ENCODE measurements at regions of chrX and their contacts with region 1.

Region 1: GRCh38 chrX:53317365-53318069 is 36.1 kb upstream of the IQSEC2 start:
- DNase-seq: peak; percentile 15 to 82
- H3K4me3 ChIP-seq: peak overlapping the region in 2 of 4 experiments; percentile 3 to 19; a peak in 2 of 8 replicates
- H3K27ac ChIP-seq: no peak overlapping the region
- H3K4me1 ChIP-seq: peaks cover 4 to 20% (median 7%) of the 10 kb centered on the region in 4 experiments
- H3K27me3 ChIP-seq: peaks cover 1 to 29% (median 16%) of the 10 kb centered on the region in 4 experiments; a peak in 6 of 7 replicates
- CTCF ChIP-seq: peak in 2 of 3 experiments; percentile 68 to 72; a peak in 3 of 4 replicates
- EP300 ChIP-seq: no peak
- POLR2A ChIP-seq: no peak
- RAD21 ChIP-seq: peak; percentile 67 to 76

Region 2: GRCh38 chrX:53284684-53285447 is 32.7 kb before region 1 on chrX:
- CTCF ChIA-PET with region 1: interaction called, 27 read pairs
- POLR2A ChIA-PET with region 1: no interaction called
- DNase-seq: peak; percentile 21 to 77
- H3K4me3 ChIP-seq: no peak overlapping the region
- H3K27ac ChIP-seq: no peak overlapping the region
- H3K4me1 ChIP-seq: peaks cover 0 to 10% (median 4%) of the 10 kb centered on the region in 4 experiments; a peak in 6 of 7 replicates
- H3K27me3 ChIP-seq: no peaks in the 10 kb centered on the region
- CTCF ChIP-seq: peak in 2 of 3 experiments; percentile 57 to 84; a peak in 3 of 4 replicates
- EP300 ChIP-seq: no peak
- POLR2A ChIP-seq: no peak
- RAD21 ChIP-seq: peak; percentile 64 to 71

Region 3: GRCh38 chrX:53300157-53300556 is 17.4 kb before region 1 on chrX:
- CTCF ChIA-PET with region 1: interaction called, 39 read pairs
- POLR2A ChIA-PET with region 1: no interaction called
- DNase-seq: no peak
- H3K4me3 ChIP-seq: no peak overlapping the region
- H3K27ac ChIP-seq: no peak overlapping the region
- H3K4me1 ChIP-seq: no peaks in the 10 kb centered on the region
- H3K27me3 ChIP-seq: no peaks in the 10 kb centered on the region
- CTCF ChIP-seq: no peak
- EP300 ChIP-seq: no peak
- POLR2A ChIP-seq: no peak
- RAD21 ChIP-seq: no peak

Region 4: DNA sequence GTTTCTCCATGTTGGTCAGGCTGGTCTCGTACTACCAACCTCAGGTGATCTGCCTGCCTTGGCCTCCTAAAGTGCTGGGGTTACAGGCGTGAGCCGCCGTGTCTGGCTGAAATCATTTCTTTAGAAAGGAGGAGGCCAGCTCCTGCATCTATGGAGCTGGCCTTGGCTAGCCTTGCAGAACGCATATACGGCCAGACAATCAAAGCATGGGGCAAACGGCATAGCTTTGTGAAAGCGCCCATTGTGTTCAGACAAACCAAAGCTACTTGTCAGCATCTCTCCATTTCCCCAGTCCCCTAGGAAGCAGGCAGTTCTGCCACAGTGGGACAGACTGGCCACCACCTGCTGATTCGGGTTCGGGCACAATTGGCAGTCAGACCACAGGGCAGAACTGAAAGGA is 12.8 kb after region 1 on chrX:
- CTCF ChIA-PET with region 1: interaction called, 78 read pairs
- POLR2A ChIA-PET with region 1: interaction called, 5 read pairs
- DNase-seq: no peak
- H3K4me3 ChIP-seq: no peak overlapping the region
- H3K27ac ChIP-seq: no peak overlapping the region
- H3K4me1 ChIP-seq: no peaks in the 10 kb centered on the region
- H3K27me3 ChIP-seq: no peaks in the 10 kb centered on the region
- CTCF ChIP-seq: no peak
- EP300 ChIP-seq: no peak
- POLR2A ChIP-seq: no peak
- RAD21 ChIP-seq: no peak

Region 5: GRCh38 chrX:53379747-53380146 is 62.2 kb after region 1 on chrX:
- CTCF ChIA-PET with region 1: interaction called, 31 read pairs
- POLR2A ChIA-PET with region 1: interaction called, 3 read pairs
- DNase-seq: no peak
- H3K4me3 ChIP-seq: no peak overlapping the region
- H3K27ac ChIP-seq: no peak overlapping the region
- H3K4me1 ChIP-seq: no peaks in the 10 kb centered on the region
- H3K27me3 ChIP-seq: no peaks in the 10 kb centered on the region
- CTCF ChIP-seq: no peak
- EP300 ChIP-seq: no peak
- POLR2A ChIP-seq: no peak
- RAD21 ChIP-seq: no peak

Measured in H1 (cell line).